Posterior vena cava (tissue), 2 donors: ENCODE measurements at regions of chr10 and their contacts with region 1.

Region 1: DNA sequence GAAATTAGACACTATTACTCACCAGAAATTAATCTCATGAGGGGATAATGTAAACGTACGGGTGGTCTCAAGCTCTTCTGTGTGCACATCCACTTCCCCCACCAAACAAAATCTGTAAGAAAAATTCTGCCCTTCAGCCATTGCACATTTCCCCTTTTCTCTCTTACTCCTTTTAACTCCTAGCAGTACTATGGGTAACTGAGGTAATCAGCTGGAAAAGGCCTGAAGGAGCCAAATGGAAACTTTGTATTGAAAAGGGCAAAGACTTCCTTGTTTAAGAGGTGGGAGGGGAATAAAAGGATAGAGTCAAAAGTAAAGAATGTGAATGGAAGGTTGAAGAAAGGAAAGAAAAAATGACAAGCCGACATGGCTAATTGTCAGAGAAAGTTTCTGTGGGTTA is 273.8 kb downstream of the RNLS start:
- DNase-seq: no peak

Region 2: DNA sequence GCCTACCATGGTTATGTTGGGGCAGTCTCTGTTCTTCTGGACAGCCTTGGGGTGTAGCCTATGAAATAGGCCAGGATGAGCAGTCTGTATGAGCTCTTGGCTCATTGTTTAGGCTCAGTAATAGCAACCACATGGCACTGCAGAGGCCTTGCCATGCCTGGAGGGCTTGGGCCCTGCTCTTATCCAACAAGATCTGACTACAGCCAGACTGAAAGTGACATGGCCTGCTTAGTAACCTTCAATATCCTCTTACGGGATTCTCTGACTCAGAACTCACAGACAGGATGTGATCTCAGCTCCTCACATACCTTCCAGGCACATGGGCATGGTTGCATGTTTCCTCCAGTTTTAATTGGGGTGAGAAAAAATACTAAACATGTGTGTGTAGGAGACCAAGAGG is 156.6 kb before region 1 on chr10:
- intact Hi-C with region 1: no loop called
- DNase-seq: no peak

Region 3: GRCh38 chr10:88230251-88230650 is 79.1 kb before region 1 on chr10:
- intact Hi-C with region 1: loop called in 1 of 2 experiments (anchors 1 kb)
- DNase-seq: no peak

Region 4: GRCh38 chr10:88270871-88271713 is 38.3 kb before region 1 on chr10:
- intact Hi-C with region 1: loop called in 1 of 2 experiments (anchors 2 kb)
- DNase-seq: no peak